AG04449 (cell line): ENCODE measurements at regions of chr20 and their contacts with region 1.

Region 1: DNA sequence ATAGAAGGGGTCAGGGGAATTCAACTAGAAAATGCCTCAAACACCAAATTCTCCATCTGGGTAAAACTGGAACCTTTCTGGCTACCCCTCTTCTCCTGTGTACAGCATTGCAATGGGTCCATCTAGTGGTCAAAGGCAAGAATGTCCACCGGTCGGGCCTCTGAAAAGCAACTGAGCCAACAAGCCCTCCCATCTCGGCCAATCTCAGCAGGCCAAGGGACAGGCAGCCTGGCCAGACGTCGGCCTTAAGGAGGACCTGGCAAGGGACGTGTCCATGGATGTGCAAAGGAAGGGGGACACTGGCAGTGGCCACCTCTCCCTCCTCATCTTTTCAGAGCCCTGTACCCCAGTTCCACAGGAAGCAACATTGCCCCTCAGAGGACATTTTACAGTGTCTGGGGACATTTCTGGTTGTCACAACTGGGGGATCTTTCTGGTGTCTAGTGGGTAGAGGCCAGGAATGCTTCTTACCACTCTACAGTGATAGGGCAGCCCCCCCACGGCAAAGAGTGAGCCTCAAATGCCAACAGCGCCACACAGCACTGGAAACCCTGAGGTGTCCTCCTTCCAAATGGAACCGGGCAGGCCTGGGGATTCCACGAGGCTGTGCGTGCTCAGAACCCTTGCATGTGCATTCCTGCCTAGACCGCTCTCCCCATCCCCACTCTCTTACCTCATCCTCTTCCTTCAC is 99.8 kb upstream of the FOXA2 start:
- DNase-seq: peak; percentile 12
- H3K4me3 ChIP-seq: no peak overlapping the region
- CTCF ChIP-seq: peak; percentile 83

Region 2: GRCh38 chr20:22333885-22334545 is 350.2 kb before region 1 on chr20:
- CTCF ChIA-PET with region 1: interaction called, 100 read pairs
- POLR2A ChIA-PET with region 1: no interaction called
- DNase-seq: no peak
- H3K4me3 ChIP-seq: no peak overlapping the region
- CTCF ChIP-seq: peak; percentile 71

Region 3: GRCh38 chr20:22339091-22339881 is 344.9 kb before region 1 on chr20:
- CTCF ChIA-PET with region 1: interaction called, 100 read pairs
- POLR2A ChIA-PET with region 1: no interaction called
- DNase-seq: no peak
- H3K4me3 ChIP-seq: no peak overlapping the region
- CTCF ChIP-seq: peak; percentile 60

Region 4: GRCh38 chr20:22729180-22729579 is 45.0 kb after region 1 on chr20:
- CTCF ChIA-PET with region 1: no interaction called
- POLR2A ChIA-PET with region 1: no interaction called
- DNase-seq: no peak
- H3K4me3 ChIP-seq: no peak overlapping the region
- CTCF ChIP-seq: no peak

Region 5: GRCh38 chr20:23340524-23340923 is 656.3 kb after region 1 on chr20:
- CTCF ChIA-PET with region 1: interaction called, 245 read pairs
- POLR2A ChIA-PET with region 1: no interaction called
- DNase-seq: peak; percentile 21
- H3K4me3 ChIP-seq: no peak overlapping the region
- CTCF ChIP-seq: peak; percentile 71